ENCODE measurements at regions of chr2 and their contacts with region 1.

Region 1: DNA sequence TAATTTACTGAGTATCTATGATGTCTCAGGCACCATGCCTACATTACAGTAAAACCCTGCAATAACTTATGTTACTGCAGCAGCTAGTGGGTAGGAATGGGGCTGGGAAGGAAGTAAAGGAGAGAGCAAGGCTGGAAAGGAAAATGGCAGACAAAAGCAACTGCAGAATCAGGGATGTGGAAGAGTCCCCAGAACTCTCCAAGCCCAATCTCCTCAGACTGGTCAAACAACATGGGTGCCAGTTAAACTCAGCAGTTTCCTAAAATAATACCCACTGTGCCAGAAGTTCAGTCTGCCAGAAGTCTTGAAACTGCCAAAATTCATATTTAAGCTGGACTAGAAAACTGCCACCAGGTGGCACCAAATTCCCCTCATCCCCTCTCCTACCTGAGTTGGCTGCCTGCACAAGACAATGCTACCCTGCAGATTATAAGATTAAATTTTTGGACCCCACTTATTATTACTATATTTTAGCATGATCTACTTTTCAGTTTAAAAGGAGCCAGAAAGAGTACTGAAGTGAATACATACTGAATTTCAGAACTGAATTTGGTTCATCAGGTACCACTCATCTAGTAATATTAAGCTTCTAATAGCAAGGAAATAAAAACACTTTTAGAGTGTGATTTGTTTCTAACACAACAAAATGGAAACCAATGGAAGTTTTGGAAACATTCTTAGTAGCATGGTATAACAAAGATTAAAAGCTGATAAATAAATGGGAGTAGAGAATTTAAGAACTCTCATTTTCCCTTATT is 86.8 kb upstream of the DNER start:
- DNase-seq: peak; percentile 85
- ATAC-seq: peak; percentile 76
- H3K4me3 Mint-ChIP-seq: no peak overlapping the region
- H3K27ac Mint-ChIP-seq: no peak overlapping the region
- H3K4me1 Mint-ChIP-seq: no peaks in the 10 kb centered on the region
- H3K27me3 Mint-ChIP-seq: no peaks in the 10 kb centered on the region
- CTCF ChIP-seq: peak; percentile 79

Region 2: GRCh38 chr2:229586746-229587705 is 214.2 kb before region 1 on chr2:
- CTCF ChIA-PET with region 1: no interaction called
- POLR2A ChIA-PET with region 1: no interaction called
- intact Hi-C with region 1: no loop called
- DNase-seq: peak; percentile 55
- ATAC-seq: peak; percentile 61
- H3K4me3 Mint-ChIP-seq: no peak overlapping the region
- H3K27ac Mint-ChIP-seq: no peak overlapping the region
- H3K4me1 Mint-ChIP-seq: no peaks in the 10 kb centered on the region
- H3K27me3 Mint-ChIP-seq: peaks cover 15% of the 10 kb centered on the region
- CTCF ChIP-seq: peak; percentile 63

Region 3: DNA sequence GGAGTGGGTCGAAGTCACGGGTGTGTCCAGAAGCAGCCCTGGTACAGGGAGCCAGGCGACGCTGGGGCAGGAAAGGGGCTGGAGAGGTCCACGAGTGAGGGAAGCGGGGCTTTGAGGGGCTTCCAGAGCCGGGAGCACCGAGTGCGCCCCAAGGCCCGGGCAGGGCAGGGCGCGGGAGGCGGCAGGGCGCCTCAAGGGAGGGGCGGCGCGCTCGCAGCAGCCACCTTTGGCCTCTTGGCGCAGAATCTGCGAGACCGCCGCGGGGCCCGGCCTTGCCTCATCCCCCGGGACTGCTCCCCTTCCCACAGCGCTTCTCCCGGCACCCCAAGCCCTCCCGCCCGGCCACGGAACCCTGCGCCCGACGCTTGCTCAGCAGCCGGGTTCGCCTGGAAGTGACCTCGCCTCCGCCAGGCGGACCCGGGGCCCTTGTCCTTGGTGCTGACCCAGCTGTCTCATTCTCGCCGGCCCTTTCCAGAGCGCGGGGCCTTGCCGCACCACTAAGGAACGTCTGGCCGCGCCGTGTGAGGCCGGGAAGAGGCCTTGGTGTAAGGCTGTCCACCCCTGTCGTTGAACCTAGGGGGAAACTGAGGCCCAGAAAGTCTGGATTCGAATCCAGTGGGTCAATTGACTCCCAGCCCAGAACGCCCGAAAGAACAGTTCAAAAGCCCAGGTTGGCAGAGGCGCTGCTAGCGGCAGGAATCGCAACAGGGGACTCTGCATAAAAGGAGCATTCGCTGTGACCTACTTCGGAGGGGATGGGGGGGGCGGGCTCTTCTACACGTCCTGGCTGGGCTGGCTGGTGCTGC is 86.2 kb before region 1 on chr2:
- CTCF ChIA-PET with region 1: no interaction called
- POLR2A ChIA-PET with region 1: no interaction called
- intact Hi-C with region 1: no loop called
- DNase-seq: peak; percentile 44
- ATAC-seq: peak; percentile 54
- H3K4me3 Mint-ChIP-seq: peak overlapping the region; percentile 19
- H3K27ac Mint-ChIP-seq: no peak overlapping the region
- H3K4me1 Mint-ChIP-seq: peaks cover 11% of the 10 kb centered on the region
- H3K27me3 Mint-ChIP-seq: peaks cover 55% of the 10 kb centered on the region
- CTCF ChIP-seq: no peak

Region 4: GRCh38 chr2:229768235-229768634 is 32.9 kb before region 1 on chr2:
- CTCF ChIA-PET with region 1: no interaction called
- POLR2A ChIA-PET with region 1: no interaction called
- intact Hi-C with region 1: no loop called
- DNase-seq: no peak
- ATAC-seq: no peak
- H3K4me3 Mint-ChIP-seq: no peak overlapping the region
- H3K27ac Mint-ChIP-seq: no peak overlapping the region
- H3K4me1 Mint-ChIP-seq: no peaks in the 10 kb centered on the region
- H3K27me3 Mint-ChIP-seq: no peaks in the 10 kb centered on the region
- CTCF ChIP-seq: no peak

Region 5: GRCh38 chr2:229780856-229781773 is 20.1 kb before region 1 on chr2:
- CTCF ChIA-PET with region 1: interaction called, 20 read pairs
- POLR2A ChIA-PET with region 1: no interaction called
- intact Hi-C with region 1: no loop called
- DNase-seq: no peak
- ATAC-seq: peak; percentile 75
- H3K4me3 Mint-ChIP-seq: no peak overlapping the region
- H3K27ac Mint-ChIP-seq: no peak overlapping the region
- H3K4me1 Mint-ChIP-seq: peaks cover 20% of the 10 kb centered on the region
- H3K27me3 Mint-ChIP-seq: no peaks in the 10 kb centered on the region
- CTCF ChIP-seq: peak; percentile 96

Region 6: GRCh38 chr2:229815858-229816257 is 14.7 kb after region 1 on chr2:
- CTCF ChIA-PET with region 1: interaction called, 10 read pairs
- POLR2A ChIA-PET with region 1: no interaction called
- intact Hi-C with region 1: no loop called
- DNase-seq: no peak
- ATAC-seq: no peak
- H3K4me3 Mint-ChIP-seq: no peak overlapping the region
- H3K27ac Mint-ChIP-seq: no peak overlapping the region
- H3K4me1 Mint-ChIP-seq: peaks cover 2% of the 10 kb centered on the region
- H3K27me3 Mint-ChIP-seq: no peaks in the 10 kb centered on the region
- CTCF ChIP-seq: no peak

Region 7: DNA sequence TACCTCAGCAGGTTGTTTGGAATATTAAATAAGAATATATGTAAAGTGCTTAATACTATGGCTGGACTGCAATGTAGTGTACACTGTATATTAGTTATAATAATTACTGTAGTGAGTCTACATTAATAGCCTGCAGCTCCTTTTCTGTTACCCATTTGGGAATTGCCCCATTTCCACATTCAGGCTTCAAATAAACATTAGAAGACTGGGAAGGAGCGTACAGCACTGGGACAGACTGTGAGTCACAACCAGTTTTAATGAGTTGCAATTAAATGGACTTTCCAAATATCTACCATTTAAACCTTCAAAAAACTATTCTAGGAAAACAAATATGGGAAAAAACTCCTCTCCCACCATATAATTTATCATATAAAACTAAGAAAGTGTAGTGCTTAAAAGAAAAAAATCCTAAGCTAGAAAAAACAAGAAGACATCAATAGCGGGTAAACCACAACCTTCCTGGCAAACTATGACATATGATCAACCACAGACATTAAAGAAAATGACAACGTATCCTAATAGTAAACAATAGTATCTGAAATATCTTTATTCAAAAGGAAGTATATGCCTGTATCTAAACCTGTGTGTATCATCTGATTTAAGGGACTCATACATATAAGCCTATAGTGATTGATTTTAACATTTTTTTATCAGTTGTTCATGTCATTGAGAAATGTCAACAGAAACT is 34.6 kb after region 1 on chr2:
- CTCF ChIA-PET with region 1: interaction called, 10 read pairs
- POLR2A ChIA-PET with region 1: no interaction called
- intact Hi-C with region 1: no loop called
- DNase-seq: no peak
- ATAC-seq: no peak
- H3K4me3 Mint-ChIP-seq: no peak overlapping the region
- H3K27ac Mint-ChIP-seq: no peak overlapping the region
- H3K4me1 Mint-ChIP-seq: peaks cover 49% of the 10 kb centered on the region
- H3K27me3 Mint-ChIP-seq: no peaks in the 10 kb centered on the region
- CTCF ChIP-seq: no peak

Region 8: DNA sequence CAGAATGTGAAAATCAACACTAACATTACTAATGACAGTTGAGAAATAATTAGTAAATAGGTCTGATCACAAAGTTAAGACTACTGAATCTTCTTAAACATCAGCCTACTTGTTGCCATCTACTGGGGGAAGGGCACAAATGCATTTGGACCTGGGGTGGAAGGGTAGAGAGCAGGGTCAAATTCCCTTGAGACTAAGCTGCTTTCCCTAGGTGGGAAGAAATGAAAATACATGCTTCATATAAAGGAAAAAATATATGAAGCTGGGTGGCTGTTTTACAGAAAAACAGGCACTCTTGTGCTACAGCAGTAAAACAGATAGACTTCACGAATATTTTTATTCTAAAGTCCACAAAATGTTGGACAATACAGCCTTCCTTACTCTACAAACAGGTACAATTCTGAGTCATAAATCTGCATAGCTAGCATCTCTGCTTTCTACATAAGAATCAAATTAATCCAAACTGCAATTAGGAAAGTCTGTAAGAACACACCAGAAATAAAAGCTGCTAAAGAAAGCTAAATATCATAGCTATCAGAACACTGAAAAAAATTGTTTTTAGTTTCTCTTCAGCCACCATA is 109.7 kb after region 1 on chr2:
- CTCF ChIA-PET with region 1: interaction called, 39 read pairs
- POLR2A ChIA-PET with region 1: no interaction called
- intact Hi-C with region 1: loop called (anchors 5 kb)
- DNase-seq: peak; percentile 33
- ATAC-seq: peak; percentile 74
- H3K4me3 Mint-ChIP-seq: no peak overlapping the region
- H3K27ac Mint-ChIP-seq: peak overlapping the region; percentile 1
- H3K4me1 Mint-ChIP-seq: peaks cover 53% of the 10 kb centered on the region
- H3K27me3 Mint-ChIP-seq: no peaks in the 10 kb centered on the region
- CTCF ChIP-seq: peak; percentile 44

Region 9: GRCh38 chr2:229917793-229918192 is 116.6 kb after region 1 on chr2:
- CTCF ChIA-PET with region 1: interaction called, 6 read pairs
- POLR2A ChIA-PET with region 1: interaction called, 4 read pairs
- intact Hi-C with region 1: loop called (anchors 5 kb)
- DNase-seq: no peak
- ATAC-seq: no peak
- H3K4me3 Mint-ChIP-seq: no peak overlapping the region
- H3K27ac Mint-ChIP-seq: peak overlapping the region; percentile 30
- H3K4me1 Mint-ChIP-seq: peaks cover 51% of the 10 kb centered on the region
- H3K27me3 Mint-ChIP-seq: no peaks in the 10 kb centered on the region
- CTCF ChIP-seq: no peak

Measured in activated CD8-positive, alpha-beta T cell treated with anti-CD3 and anti-CD28 coated beads for 36 hours (primary cell).